ENCODE measurements at regions of chr4 and their contacts with region 1.

Region 1: GRCh38 chr4:73258686-73259570 is at the start of gene ANKRD17:
- DNase-seq: peak; percentile 76 to 85
- H3K4me3 ChIP-seq: peak within 1 kb of the TSS; percentile 82
- H3K27ac ChIP-seq: peak within 1 kb of the TSS; percentile 94
- H3K4me1 ChIP-seq: peaks cover 22% of the 10 kb centered on the region
- H3K27me3 ChIP-seq: no peaks in the 10 kb centered on the region
- CTCF ChIP-seq: no peak
- total RNA-seq, gene ANKRD17: 26.9 and 37.9 TPM in 2 replicates

Region 2: GRCh38 chr4:73069338-73070073 is 189.4 kb before region 1 on chr4 and contains the start of gene COX18:
- CTCF ChIA-PET with region 1: no interaction called
- POLR2A ChIA-PET with region 1: interaction called, 5 read pairs
- intact Hi-C with region 1: loop called (anchors 2 kb)
- DNase-seq: peak; percentile 83 to 91
- H3K4me3 ChIP-seq: peak within 1 kb of the TSS; percentile 84
- H3K27ac ChIP-seq: peak within 1 kb of the TSS; percentile 74
- H3K4me1 ChIP-seq: 0 out of 2 replicates have a peak, but pooled peaks cover 3% of the 10 kb centered on the region
- H3K27me3 ChIP-seq: no peaks in the 10 kb centered on the region
- CTCF ChIP-seq: no peak
- total RNA-seq, gene COX18: 8.0 TPM in 2 replicates

Region 3: DNA sequence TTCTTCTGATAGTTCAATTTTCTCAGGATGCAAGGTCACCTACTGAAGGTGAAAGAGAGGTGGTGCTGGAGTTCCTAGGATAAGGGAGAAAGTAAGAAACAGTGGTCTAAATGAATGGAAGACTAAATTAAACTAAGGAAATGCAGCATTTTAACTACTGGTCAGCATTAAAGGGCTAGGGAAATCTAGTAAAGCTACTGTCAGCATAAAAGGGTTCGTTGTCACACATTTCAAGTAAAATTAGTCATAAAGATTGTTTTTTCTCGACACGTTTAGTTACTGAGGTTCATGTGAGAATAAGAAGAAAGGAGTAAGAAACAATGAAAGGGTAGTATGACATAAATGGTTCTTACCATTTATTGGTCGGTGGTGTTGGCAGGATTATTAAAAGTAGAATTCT is 149.4 kb before region 1 on chr4:
- CTCF ChIA-PET with region 1: no interaction called
- POLR2A ChIA-PET with region 1: no interaction called
- intact Hi-C with region 1: no loop called
- DNase-seq: no peak
- H3K4me3 ChIP-seq: no peak overlapping the region
- H3K27ac ChIP-seq: no peak overlapping the region
- H3K4me1 ChIP-seq: no peaks in the 10 kb centered on the region
- H3K27me3 ChIP-seq: no peaks in the 10 kb centered on the region
- CTCF ChIP-seq: no peak

Region 4: DNA sequence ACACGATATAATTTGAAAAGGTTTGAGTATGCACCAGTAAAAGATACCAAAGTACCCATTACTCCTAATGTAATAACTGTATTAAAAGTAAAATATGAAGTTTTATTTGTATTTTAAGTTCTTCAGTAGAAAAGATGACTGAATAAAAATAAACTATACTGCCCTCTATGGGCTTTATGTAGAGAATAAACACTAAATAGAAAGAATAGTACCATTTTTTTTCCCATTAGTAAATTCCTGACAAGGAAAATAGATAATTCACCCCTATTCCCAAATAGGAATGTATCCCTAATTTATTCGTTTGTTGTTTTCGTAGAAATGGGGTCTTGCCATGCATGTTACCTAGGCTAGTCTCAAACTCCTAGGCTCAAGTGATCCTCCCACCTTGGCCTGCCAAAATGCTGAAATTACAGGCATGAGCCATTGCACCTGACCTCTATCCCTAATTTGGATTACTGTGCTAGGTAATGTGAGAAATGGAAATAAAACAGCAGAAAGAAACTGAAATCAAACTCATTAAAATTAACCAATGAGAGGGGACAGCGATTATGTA is 115.9 kb before region 1 on chr4:
- CTCF ChIA-PET with region 1: interaction called, 3 read pairs
- POLR2A ChIA-PET with region 1: no interaction called
- intact Hi-C with region 1: loop called (anchors 10 kb)
- DNase-seq: no peak
- H3K4me3 ChIP-seq: no peak overlapping the region
- H3K27ac ChIP-seq: no peak overlapping the region
- H3K4me1 ChIP-seq: no peaks in the 10 kb centered on the region
- H3K27me3 ChIP-seq: no peaks in the 10 kb centered on the region
- CTCF ChIP-seq: peak; percentile 44; the same call in 1 of the 2 replicates

Region 5: GRCh38 chr4:73197220-73197619 is 61.7 kb before region 1 on chr4:
- CTCF ChIA-PET with region 1: interaction called, 14 read pairs
- POLR2A ChIA-PET with region 1: no interaction called
- intact Hi-C with region 1: no loop called
- DNase-seq: no peak
- H3K4me3 ChIP-seq: no peak overlapping the region
- H3K27ac ChIP-seq: no peak overlapping the region
- H3K4me1 ChIP-seq: no peaks in the 10 kb centered on the region
- H3K27me3 ChIP-seq: no peaks in the 10 kb centered on the region
- CTCF ChIP-seq: no peak

Region 6: DNA sequence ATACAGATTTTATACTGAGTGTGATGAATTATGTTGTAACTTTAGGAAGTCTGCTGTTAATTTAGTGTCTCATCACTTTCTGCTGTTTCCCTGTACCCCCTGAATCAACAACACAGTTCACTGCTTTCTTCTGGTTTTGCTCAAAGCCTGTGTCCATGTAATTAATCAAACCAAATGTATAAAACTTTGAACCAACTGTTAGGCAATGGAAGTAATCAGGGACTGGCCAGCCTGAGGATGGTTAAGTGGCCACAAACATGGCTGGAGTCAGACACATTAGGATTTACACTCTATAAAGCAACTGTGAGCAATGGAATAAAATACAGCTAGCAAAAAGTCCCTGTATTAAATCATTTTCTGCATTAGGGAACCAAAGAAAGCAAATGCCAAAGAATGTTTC is 652.8 kb after region 1 on chr4:
- CTCF ChIA-PET with region 1: no interaction called
- POLR2A ChIA-PET with region 1: no interaction called
- intact Hi-C with region 1: no loop called
- DNase-seq: no peak
- H3K4me3 ChIP-seq: no peak overlapping the region
- H3K27ac ChIP-seq: no peak overlapping the region
- H3K4me1 ChIP-seq: peaks cover 1% of the 10 kb centered on the region; the same call in 1 of the 2 replicates
- H3K27me3 ChIP-seq: no peaks in the 10 kb centered on the region
- CTCF ChIP-seq: no peak